Right cardiac atrium (tissue), 5 donors: ENCODE measurements at regions of chr3 and their contacts with region 1.

Region 1: GRCh38 chr3:129560901-129561594 is 18.1 kb downstream of the H1-8 start:
- DNase-seq: peak; percentile 93 to 97 (median 97)
- ATAC-seq: peak; percentile 84 to 87
- H3K4me3 ChIP-seq: no peak overlapping the region
- H3K27ac ChIP-seq: peak overlapping the region; percentile 79
- H3K4me1 ChIP-seq: peaks cover 16% of the 10 kb centered on the region
- H3K27me3 ChIP-seq: no peaks in the 10 kb centered on the region

Region 2: DNA sequence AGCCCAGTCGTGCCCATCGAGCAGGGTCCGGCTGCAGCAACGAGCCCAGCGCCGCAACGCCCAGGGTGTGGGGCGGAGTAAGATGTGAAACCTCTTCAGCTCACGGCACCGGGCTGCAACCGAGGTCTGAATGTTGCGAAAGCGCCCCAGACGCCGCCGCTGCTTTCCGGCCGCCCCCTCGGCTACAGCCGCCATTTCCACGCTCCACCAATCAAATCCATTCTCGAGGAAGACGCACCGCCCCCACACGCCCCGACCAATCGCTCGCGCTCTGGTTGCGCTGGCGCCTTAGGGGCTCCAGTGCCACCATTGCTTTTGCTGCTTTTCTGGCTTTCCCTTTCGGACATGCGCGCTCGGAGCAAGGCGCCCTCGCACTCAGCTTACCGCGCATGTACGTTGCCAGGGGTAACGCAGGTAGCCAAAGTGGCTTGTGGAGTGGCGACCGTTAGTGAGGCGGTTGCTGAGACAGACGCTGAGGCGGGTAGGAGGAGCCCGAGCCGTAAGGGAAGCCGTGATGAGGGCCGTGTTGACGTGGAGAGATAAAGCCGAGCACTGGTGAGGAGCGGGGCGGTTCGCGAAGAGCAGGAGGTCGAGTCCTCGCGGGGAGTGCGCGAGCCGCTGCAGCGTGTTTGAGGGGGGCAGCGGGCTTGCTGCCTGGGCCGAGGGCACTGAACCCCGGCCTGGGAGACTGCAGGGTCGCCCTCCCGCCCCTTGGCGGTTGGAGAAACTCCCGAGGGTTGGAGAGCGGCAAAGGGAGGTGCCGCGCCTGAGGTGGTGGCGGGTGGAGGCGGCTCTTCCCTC is 121.0 kb before region 1 on chr3 and contains the starts of genes IFT122 and MBD4:
- intact Hi-C with region 1: no loop called
- DNase-seq: peak; percentile 98 to 99 (median 99)
- ATAC-seq: peak; percentile 96 to 97
- H3K4me3 ChIP-seq: peak within 1 kb of the TSS; percentile 64
- H3K27ac ChIP-seq: peak within 1 kb of the TSS; percentile 94
- H3K4me1 ChIP-seq: peaks cover 22% of the 10 kb centered on the region
- H3K27me3 ChIP-seq: no peaks in the 10 kb centered on the region
- total RNA-seq, gene IFT122: 30.7 to 46.4 (median 35.9) TPM
- total RNA-seq, gene MBD4: 25.3 to 52.1 (median 25.7) TPM

Region 3: GRCh38 chr3:129461022-129461421 is 100.0 kb before region 1 on chr3:
- intact Hi-C with region 1: no loop called
- DNase-seq: no peak
- ATAC-seq: no peak
- H3K4me3 ChIP-seq: no peak overlapping the region
- H3K27ac ChIP-seq: peak overlapping the region; percentile 98
- H3K4me1 ChIP-seq: no peaks in the 10 kb centered on the region
- H3K27me3 ChIP-seq: no peaks in the 10 kb centered on the region

Region 4: GRCh38 chr3:129490242-129491045 is 70.6 kb before region 1 on chr3:
- intact Hi-C with region 1: loop called in 1 of 4 experiments (anchors 10 kb)
- DNase-seq: peak; percentile 84 to 92 (median 92)
- ATAC-seq: peak; percentile 88 to 91
- H3K4me3 ChIP-seq: no peak overlapping the region
- H3K27ac ChIP-seq: peak overlapping the region; percentile 84
- H3K4me1 ChIP-seq: peaks cover 9% of the 10 kb centered on the region
- H3K27me3 ChIP-seq: no peaks in the 10 kb centered on the region

Region 5: GRCh38 chr3:129507181-129507831 is 53.7 kb before region 1 on chr3:
- intact Hi-C with region 1: loop called in 1 of 4 experiments (anchors 10 kb)
- DNase-seq: peak in 2 of 3 donors; percentile 68 to 73
- ATAC-seq: peak; percentile 75 to 79
- H3K4me3 ChIP-seq: no peak overlapping the region
- H3K27ac ChIP-seq: peak overlapping the region; percentile 43
- H3K4me1 ChIP-seq: peaks cover 24% of the 10 kb centered on the region
- H3K27me3 ChIP-seq: no peaks in the 10 kb centered on the region

Region 6: DNA sequence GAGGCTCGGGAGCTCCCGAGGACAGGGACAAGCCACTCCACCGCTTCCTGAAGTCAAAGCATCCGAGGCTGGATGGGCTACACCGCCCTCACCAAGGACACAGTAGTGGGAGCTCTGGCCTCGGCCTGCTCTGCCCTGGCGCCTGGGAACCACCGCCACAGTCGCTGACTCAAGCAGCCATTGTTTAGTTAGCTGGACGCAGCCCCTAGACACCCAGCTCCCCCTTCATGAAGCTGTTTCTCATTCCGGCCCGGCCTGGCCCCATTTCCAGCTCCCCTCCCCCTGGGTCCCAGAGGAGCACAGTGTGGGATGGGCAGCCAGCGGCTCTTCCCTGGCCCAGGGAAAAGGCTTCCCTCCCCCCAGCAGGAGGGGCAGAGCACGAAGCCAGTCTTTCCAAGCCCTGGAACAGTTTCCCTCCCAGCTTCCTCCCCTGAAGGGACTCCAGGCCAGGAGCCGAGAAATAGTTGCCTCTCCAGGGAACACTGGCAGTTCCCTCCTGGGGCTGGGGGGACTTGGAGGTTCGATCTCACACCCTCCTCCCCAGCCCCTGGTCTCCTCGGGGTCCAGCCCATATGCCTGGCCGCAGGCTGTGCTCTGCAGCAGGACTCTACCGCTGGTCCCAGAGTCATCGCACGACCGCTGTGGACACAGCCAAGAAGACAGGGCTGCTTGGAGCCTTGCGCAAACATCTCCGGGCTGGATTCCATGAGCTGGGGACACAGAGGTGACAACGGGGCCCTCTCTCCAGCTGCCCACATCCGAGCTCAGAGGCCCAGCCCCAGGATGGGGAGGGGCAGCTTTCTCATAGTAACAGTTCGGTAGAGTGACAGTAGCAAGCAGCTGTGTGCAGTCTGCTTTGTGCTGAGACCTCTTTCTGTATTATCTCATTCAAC is 35.4 kb after region 1 on chr3:
- intact Hi-C with region 1: loop called in 2 of 4 experiments (anchors 5 kb)
- DNase-seq: peak; percentile 95 to 97 (median 96)
- ATAC-seq: peak; percentile 86 to 88
- H3K4me3 ChIP-seq: peak overlapping the region; percentile 7
- H3K27ac ChIP-seq: peak overlapping the region; percentile 93
- H3K4me1 ChIP-seq: peaks cover 42% of the 10 kb centered on the region
- H3K27me3 ChIP-seq: no peaks in the 10 kb centered on the region